Endothelial cell of umbilical vein (primary cell): ENCODE measurements at regions of chr7 and their contacts with region 1.

Region 1: DNA sequence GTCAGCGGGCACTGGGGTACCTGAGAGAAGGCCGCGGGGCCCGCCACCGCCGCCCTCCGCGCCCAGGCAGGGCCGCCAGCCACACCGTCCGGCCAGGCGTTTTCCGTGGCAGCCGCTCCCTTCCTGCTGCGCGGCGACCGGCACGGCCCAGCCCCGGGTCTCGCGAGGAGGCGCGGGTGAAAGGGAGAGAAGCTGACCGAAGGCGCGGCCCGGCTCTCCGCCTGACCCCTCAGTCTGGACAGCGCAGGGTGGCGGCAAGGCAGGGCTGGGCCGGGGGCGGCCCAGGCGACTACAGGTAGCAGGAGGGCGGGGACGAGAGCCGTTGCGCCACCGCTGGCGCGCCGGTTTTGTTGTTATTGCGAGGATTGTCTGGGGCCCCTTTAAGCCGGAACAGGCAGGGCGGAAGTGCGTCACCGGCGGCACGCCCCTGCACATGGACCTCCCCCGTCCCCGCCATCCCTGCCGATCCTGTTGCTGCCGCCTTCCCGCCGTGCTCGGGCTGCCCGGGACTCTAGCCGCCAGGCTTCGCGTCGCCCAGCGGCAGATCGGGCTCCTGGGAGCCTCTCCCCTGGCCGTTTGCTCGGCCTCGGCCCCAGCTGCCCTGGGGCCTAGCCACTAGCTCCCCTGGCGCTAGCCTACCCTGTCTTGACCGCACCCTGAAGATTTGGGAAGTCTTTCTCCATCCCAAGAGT is at the start of gene HERPUD2:
- DNase-seq: peak; percentile 91
- H3K4me3 ChIP-seq: peak within 1 kb of the TSS; percentile 53 to 81 (median 73)
- H3K27ac ChIP-seq: peak within 1 kb of the TSS; percentile 83
- H3K4me1 ChIP-seq: peaks cover 47% of the 10 kb centered on the region
- H3K27me3 ChIP-seq: no peaks in the 10 kb centered on the region
- CTCF ChIP-seq: no peak
- POLR2A ChIP-seq: peak; percentile 94
- total RNA-seq, gene HERPUD2: 27.7 and 33.9 TPM in 2 replicates

Region 2: GRCh38 chr7:35707422-35707821 is 12.5 kb after region 1 on chr7:
- CTCF ChIA-PET with region 1: interaction called, 49 read pairs
- POLR2A ChIA-PET with region 1: no interaction called
- dilution Hi-C with region 1: no loop called
- intact Hi-C with region 1: no loop called
- DNase-seq: no peak
- H3K4me3 ChIP-seq: no peak overlapping the region
- H3K27ac ChIP-seq: no peak overlapping the region
- H3K4me1 ChIP-seq: peaks cover 6% of the 10 kb centered on the region
- H3K27me3 ChIP-seq: no peaks in the 10 kb centered on the region
- CTCF ChIP-seq: no peak
- POLR2A ChIP-seq: no peak

Region 3: GRCh38 chr7:35714862-35715261 is 19.9 kb after region 1 on chr7:
- CTCF ChIA-PET with region 1: interaction called, 49 read pairs
- POLR2A ChIA-PET with region 1: no interaction called
- dilution Hi-C with region 1: no loop called
- intact Hi-C with region 1: no loop called
- DNase-seq: no peak
- H3K4me3 ChIP-seq: no peak overlapping the region
- H3K27ac ChIP-seq: no peak overlapping the region
- H3K4me1 ChIP-seq: no peaks in the 10 kb centered on the region
- H3K27me3 ChIP-seq: peaks cover 10 to 20% of the 10 kb centered on the region in 2 experiments
- CTCF ChIP-seq: no peak
- POLR2A ChIP-seq: no peak

Region 4: DNA sequence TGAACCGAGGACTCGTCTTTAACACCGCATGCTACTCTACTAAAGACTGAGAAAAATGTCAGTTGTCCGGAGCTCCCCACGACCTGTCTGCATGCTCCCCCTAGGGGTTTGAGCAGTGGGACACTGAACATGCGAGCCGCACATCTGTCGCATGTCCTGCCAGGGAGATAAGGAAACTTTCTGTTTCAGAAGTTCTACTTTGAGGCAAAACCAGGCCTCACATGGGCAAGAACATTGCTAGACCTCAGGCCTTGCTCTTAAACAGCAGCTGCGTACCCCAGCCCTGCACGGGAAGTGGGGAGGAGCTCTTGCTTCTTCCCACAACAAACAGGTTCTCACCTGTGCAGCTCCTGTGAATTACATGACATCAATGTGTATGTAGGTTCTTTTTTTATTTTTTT is 30.4 kb after region 1 on chr7:
- CTCF ChIA-PET with region 1: no interaction called
- POLR2A ChIA-PET with region 1: no interaction called
- dilution Hi-C with region 1: no loop called
- intact Hi-C with region 1: no loop called
- DNase-seq: no peak
- H3K4me3 ChIP-seq: no peak overlapping the region
- H3K27ac ChIP-seq: no peak overlapping the region
- H3K4me1 ChIP-seq: no peaks in the 10 kb centered on the region
- H3K27me3 ChIP-seq: peaks cover 3 to 4% of the 10 kb centered on the region in 2 experiments
- CTCF ChIP-seq: no peak
- POLR2A ChIP-seq: no peak